ENCODE measurements at regions of chr10 and their contacts with region 1.

Region 1: DNA sequence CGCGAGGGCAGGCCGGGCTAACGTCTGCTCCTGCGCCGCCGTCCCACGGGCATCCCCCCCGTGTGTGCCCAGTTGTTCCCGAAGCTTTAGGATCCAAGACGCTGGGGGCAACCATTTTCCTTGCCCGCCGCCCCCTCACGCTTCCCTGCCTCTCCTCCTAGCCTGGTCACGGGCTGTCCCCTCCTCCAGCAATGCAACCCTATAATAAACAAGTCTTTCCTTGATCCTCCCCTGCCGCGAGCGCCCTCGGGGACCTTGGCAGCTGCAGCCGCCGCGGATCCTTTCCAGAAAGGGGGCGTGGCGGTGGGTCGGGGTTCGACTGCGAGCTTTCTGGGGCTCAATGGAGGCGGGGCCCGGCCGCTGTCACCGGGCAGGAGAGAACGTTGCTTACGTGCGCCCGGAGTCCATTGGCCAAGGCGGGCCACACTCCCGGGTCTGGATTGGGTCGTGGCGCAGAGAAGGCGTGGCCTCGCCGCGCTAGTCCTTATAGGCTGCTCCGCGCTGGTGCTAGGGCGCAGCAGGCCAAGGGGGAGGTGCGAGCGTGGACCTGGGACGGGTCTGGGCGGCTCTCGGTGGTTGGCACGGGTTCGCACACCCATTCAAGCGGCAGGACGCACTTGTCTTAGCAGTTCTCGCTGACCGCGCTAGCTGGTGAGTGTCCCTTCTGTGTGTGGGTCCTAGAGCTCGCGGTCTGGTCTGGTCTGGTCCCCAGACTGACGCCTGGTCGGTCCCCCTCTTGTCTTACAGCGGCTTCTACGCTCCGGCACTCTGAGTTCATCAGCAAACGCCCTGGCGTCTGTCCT is at the start of gene DDIT4:
- DNase-seq: peak; percentile 100
- H3K4me3 ChIP-seq: peak within 1 kb of the TSS; percentile 69 to 100 (median 93)
- H3K27ac ChIP-seq: peak within 1 kb of the TSS; percentile 95 to 100 (median 100)
- H3K27me3 ChIP-seq: no peaks in the 10 kb centered on the region
- CTCF ChIP-seq: peak in 20 of 56 donors; percentile 5 to 48 (median 26)
- total RNA-seq, gene DDIT4: 33.5 to 407 (median 111) TPM

Region 2: DNA sequence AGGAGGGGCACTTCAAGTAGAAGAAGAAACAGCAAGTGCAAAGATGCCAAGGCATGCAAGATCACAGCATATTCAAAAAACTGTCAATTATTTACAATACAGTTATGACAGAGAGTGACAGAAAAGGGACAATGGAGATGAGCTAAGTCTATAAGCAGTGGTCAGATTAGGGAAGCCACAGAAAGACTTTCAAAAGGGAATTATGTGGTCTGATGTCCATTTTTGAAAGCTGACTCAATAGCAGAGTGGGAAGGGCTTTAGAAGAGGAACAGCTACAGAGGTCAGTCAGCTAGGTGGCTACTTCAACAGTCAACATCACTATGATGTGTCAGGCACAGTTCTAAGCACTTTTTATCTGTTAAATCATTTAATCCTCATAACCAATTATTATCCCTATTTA is 140.1 kb before region 1 on chr10:
- intact Hi-C with region 1: loop called in 1 of 2 experiments (anchors 5 kb)
- DNase-seq: no peak
- H3K4me3 ChIP-seq: no peak overlapping the region
- H3K27ac ChIP-seq: peak overlapping the region in 35 of 59 donors; percentile 2 to 79 (median 48)
- H3K27me3 ChIP-seq: no peaks in the 10 kb centered on the region
- CTCF ChIP-seq: no peak

Region 3: GRCh38 chr10:72215652-72216549 is 57.7 kb before region 1 on chr10 and contains the starts of genes ANAPC16 and ASCC1:
- intact Hi-C with region 1: loop called (anchors 1 to 5 kb)
- DNase-seq: peak; percentile 75 to 94 (median 88)
- H3K4me3 ChIP-seq: peak within 1 kb of the TSS; percentile 61 to 97 (median 82)
- H3K27ac ChIP-seq: peak within 1 kb of the TSS; percentile 95 to 100 (median 100)
- H3K27me3 ChIP-seq: no peaks in the 10 kb centered on the region
- CTCF ChIP-seq: peak in 22 of 56 donors; percentile 10 to 52 (median 26)
- total RNA-seq, gene ANAPC16: 27.8 to 74.8 (median 40.9) TPM
- total RNA-seq, gene ASCC1: 22.8 to 68.2 (median 40.7) TPM

Region 4: GRCh38 chr10:72254813-72255568 is 18.6 kb before region 1 on chr10:
- intact Hi-C with region 1: loop called (anchors 1 to 2 kb)
- DNase-seq: peak; percentile 90 to 98 (median 95)
- H3K4me3 ChIP-seq: peak overlapping the region in 21 of 59 donors; percentile 2 to 43 (median 13)
- H3K27ac ChIP-seq: peak overlapping the region; percentile 92 to 100 (median 99)
- H3K27me3 ChIP-seq: no peaks in the 10 kb centered on the region
- CTCF ChIP-seq: peak in 34 of 56 donors; percentile 6 to 60 (median 26)

Region 5: GRCh38 chr10:72319416-72320254 is 46.0 kb after region 1 on chr10:
- intact Hi-C with region 1: loop called (anchors 2 kb)
- DNase-seq: peak in 9 of 10 donors; percentile 58 to 90 (median 81)
- H3K4me3 ChIP-seq: peak overlapping the region; percentile 35 to 70 (median 53)
- H3K27ac ChIP-seq: peak overlapping the region; percentile 40 to 98 (median 92)
- H3K27me3 ChIP-seq: no peaks in the 10 kb centered on the region
- CTCF ChIP-seq: peak in 14 of 56 donors; percentile 4 to 31 (median 20)